ENCODE measurements at regions of chr1 and their contacts with region 1.

Region 1: GRCh38 chr1:153494976-153495535 is 34.6 kb upstream of the S100A7 start:
- DNase-seq: peak; percentile 52
- ATAC-seq: peak; percentile 71
- H3K4me3 ChIP-seq: no peak overlapping the region
- H3K27ac ChIP-seq: no peak overlapping the region
- H3K4me1 ChIP-seq: peaks cover 5% of the 10 kb centered on the region; the same call in 1 of the 2 replicates
- H3K27me3 ChIP-seq: peaks cover 14% of the 10 kb centered on the region
- CTCF ChIP-seq: peak; percentile 90
- POLR2A ChIP-seq: no peak
- RAD21 ChIP-seq: peak; percentile 84

Region 2: GRCh38 chr1:153352523-153352922 is 142.5 kb before region 1 on chr1:
- CTCF ChIA-PET with region 1: interaction called, 41 read pairs
- POLR2A ChIA-PET with region 1: no interaction called
- dilution Hi-C with region 1: no loop called
- in situ Hi-C with region 1: no loop called
- intact Hi-C with region 1: loop called (anchors 1 kb)
- DNase-seq: peak; percentile 62
- ATAC-seq: peak; percentile 93
- H3K4me3 ChIP-seq: no peak overlapping the region
- H3K27ac ChIP-seq: no peak overlapping the region
- H3K4me1 ChIP-seq: no peaks in the 10 kb centered on the region
- H3K27me3 ChIP-seq: peaks cover 4% of the 10 kb centered on the region; the same call in 1 of the 2 replicates
- CTCF ChIP-seq: peak; percentile 92
- POLR2A ChIP-seq: no peak
- RAD21 ChIP-seq: peak; percentile 91

Region 3: DNA sequence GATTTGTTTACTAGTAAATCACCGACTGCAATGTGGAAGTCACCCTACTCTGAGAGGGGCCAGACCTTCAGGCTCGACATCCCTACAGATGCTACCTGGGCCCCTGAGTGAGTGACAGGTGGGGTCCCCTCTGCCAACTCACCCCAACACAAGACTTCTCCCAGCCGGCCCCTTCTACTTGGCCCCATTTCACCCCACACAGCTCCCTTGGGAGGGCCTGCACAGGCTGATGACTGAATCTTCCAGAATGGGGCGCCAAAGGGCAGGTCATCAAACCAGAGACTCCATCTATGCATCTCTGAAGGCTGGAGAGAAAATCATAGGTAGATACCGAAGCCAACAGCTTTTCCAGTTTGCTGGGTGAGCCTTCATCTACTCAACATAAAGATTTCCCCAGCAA is 94.8 kb before region 1 on chr1:
- CTCF ChIA-PET with region 1: interaction called, 5 read pairs
- POLR2A ChIA-PET with region 1: no interaction called
- dilution Hi-C with region 1: no loop called
- in situ Hi-C with region 1: no loop called
- intact Hi-C with region 1: loop called (anchors 1 kb)
- DNase-seq: no peak
- ATAC-seq: 0 out of 2 replicates have a peak, but pooled peaks have one; percentile 24
- H3K4me3 ChIP-seq: no peak overlapping the region
- H3K27ac ChIP-seq: no peak overlapping the region
- H3K4me1 ChIP-seq: no peaks in the 10 kb centered on the region
- H3K27me3 ChIP-seq: peaks cover 7% of the 10 kb centered on the region; the same call in 1 of the 2 replicates
- CTCF ChIP-seq: 0 out of 2 replicates have a peak, but pooled peaks have one; percentile 12
- POLR2A ChIP-seq: no peak
- RAD21 ChIP-seq: 0 out of 2 replicates have a peak, but pooled peaks have one; percentile 11

Region 4: GRCh38 chr1:153465811-153466636 is 29.0 kb before region 1 on chr1:
- CTCF ChIA-PET with region 1: interaction called, 14 read pairs
- POLR2A ChIA-PET with region 1: no interaction called
- dilution Hi-C with region 1: no loop called
- in situ Hi-C with region 1: no loop called
- intact Hi-C with region 1: no loop called
- DNase-seq: peak; percentile 8
- ATAC-seq: peak; percentile 81
- H3K4me3 ChIP-seq: no peak overlapping the region
- H3K27ac ChIP-seq: no peak overlapping the region
- H3K4me1 ChIP-seq: no peaks in the 10 kb centered on the region
- H3K27me3 ChIP-seq: peaks cover 8% of the 10 kb centered on the region
- CTCF ChIP-seq: peak; percentile 63
- POLR2A ChIP-seq: no peak
- RAD21 ChIP-seq: peak; percentile 55